ENCODE measurements at regions of chr11 and their contacts with region 1.

Region 1: GRCh38 chr11:95790123-95790932 is at the start of gene CEP57:
- DNase-seq: peak; percentile 98
- H3K4me3 ChIP-seq: peak within 1 kb of the TSS; percentile 83
- H3K27ac ChIP-seq: peak within 1 kb of the TSS; percentile 94
- H3K4me1 ChIP-seq: peaks cover 28% of the 10 kb centered on the region
- CTCF ChIP-seq: no peak
- total RNA-seq, gene CEP57: 53.5 and 57.7 TPM in 2 replicates

Region 2: GRCh38 chr11:95200781-95201457 is 589.4 kb before region 1 on chr11:
- CTCF ChIA-PET with region 1: no interaction called
- POLR2A ChIA-PET with region 1: no interaction called
- intact Hi-C with region 1: no loop called
- DNase-seq: no peak
- H3K4me3 ChIP-seq: no peak overlapping the region
- H3K27ac ChIP-seq: no peak overlapping the region
- H3K4me1 ChIP-seq: no peaks in the 10 kb centered on the region
- CTCF ChIP-seq: no peak

Region 3: DNA sequence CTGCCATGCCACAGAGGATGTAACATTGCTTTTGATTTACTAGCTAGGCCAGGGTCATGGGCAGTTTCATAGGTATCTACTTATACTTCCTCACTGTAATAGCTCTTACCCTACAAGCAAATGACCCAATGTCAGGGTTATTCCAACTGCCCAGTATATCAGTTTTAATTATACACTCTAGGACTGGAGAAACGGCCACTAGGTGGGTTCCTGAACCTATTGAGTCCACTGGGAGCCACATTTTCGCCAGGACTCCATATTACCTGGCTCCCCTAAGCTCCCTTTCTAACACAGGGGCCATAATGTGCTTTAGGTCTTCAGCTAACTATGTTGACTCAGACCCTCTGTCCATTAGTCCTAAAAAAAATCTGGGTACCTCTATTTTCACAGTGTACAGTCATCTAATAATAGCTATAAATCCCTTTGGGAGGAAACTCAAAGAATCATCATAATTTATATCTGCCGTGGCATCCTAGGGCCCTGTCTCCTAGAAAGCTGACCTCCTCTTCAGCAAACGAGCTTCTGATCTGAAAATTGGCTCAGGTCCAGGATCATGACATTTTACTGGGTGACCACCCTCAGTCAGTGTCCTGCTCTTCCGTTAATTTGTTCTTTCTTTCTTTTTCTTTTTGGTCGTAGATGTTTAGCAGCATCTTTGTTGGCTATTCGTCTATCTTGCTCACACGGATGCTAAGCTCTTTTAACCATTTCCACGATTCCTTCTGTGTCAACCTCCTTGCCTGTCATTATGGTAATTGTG is 245.0 kb before region 1 on chr11:
- CTCF ChIA-PET with region 1: no interaction called
- POLR2A ChIA-PET with region 1: no interaction called
- intact Hi-C with region 1: no loop called
- DNase-seq: peak; percentile 16
- H3K4me3 ChIP-seq: no peak overlapping the region
- H3K27ac ChIP-seq: no peak overlapping the region
- H3K4me1 ChIP-seq: no peaks in the 10 kb centered on the region
- CTCF ChIP-seq: peak; percentile 51

Region 4: DNA sequence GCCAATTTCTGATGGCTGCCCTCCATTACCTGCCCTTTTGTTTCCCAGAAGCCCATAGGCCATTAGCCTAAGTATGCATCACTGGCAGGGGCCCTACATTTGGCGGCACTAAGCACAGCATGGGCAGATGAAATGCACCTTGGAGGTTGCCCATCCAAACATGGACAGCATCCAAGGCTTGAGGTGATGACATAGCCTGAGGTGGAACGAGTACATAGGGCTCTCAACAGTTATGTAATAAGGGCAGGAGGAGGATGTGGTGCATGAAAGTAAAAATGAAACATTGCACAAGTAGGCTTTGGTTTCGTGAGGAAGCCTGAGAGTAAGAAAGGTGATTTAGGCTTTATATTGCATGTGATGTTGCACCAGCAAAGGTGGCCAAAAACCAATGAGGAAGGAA is 148.8 kb before region 1 on chr11:
- CTCF ChIA-PET with region 1: no interaction called
- POLR2A ChIA-PET with region 1: no interaction called
- intact Hi-C with region 1: no loop called
- DNase-seq: no peak
- H3K4me3 ChIP-seq: no peak overlapping the region
- H3K27ac ChIP-seq: no peak overlapping the region
- H3K4me1 ChIP-seq: no peaks in the 10 kb centered on the region
- CTCF ChIP-seq: no peak

Region 5: GRCh38 chr11:95778699-95779098 is 11.6 kb before region 1 on chr11:
- CTCF ChIA-PET with region 1: no interaction called
- POLR2A ChIA-PET with region 1: interaction called, 30 read pairs
- intact Hi-C with region 1: no loop called
- DNase-seq: no peak
- H3K4me3 ChIP-seq: no peak overlapping the region
- H3K27ac ChIP-seq: no peak overlapping the region
- H3K4me1 ChIP-seq: peaks cover 16% of the 10 kb centered on the region
- CTCF ChIP-seq: no peak

Region 6: DNA sequence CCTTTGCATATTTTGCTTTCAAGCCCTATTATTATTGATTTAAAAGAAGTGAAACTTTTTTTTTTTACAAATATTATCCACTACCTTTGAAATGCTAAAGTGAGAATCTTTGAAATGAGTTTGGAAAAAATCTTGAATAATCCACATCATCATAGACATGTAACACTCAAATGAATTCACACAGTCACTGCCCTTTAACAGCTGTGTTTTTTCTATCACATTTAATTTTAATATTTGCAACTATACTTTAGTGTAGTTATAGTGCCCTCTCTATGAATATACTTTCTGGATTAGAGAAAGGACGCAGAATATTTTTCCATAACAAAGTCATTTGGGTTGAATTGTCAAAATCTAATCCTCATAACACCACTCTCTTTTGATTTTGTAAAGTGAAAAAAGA is 171.4 kb after region 1 on chr11:
- CTCF ChIA-PET with region 1: no interaction called
- POLR2A ChIA-PET with region 1: no interaction called
- intact Hi-C with region 1: no loop called
- DNase-seq: no peak
- H3K4me3 ChIP-seq: no peak overlapping the region
- H3K27ac ChIP-seq: no peak overlapping the region
- H3K4me1 ChIP-seq: no peaks in the 10 kb centered on the region
- CTCF ChIP-seq: no peak